ENCODE measurements at regions of chr19 and their contacts with region 1.

Region 1: GRCh38 chr19:45717166-45717982 is 13.3 kb downstream of the FBXO46 start:
- DNase-seq: peak; percentile 99
- H3K4me3 Mint-ChIP-seq: peak overlapping the region; percentile 96
- H3K27ac Mint-ChIP-seq: peak overlapping the region; percentile 93
- H3K4me1 Mint-ChIP-seq: peaks cover 39% of the 10 kb centered on the region
- H3K27me3 Mint-ChIP-seq: no peaks in the 10 kb centered on the region

Region 2: GRCh38 chr19:45506246-45506990 is 211.0 kb before region 1 on chr19:
- CTCF ChIA-PET with region 1: no interaction called
- POLR2A ChIA-PET with region 1: no interaction called
- intact Hi-C with region 1: loop called (anchors 1 kb)
- DNase-seq: peak; percentile 99
- H3K4me3 Mint-ChIP-seq: peak overlapping the region; percentile 86
- H3K27ac Mint-ChIP-seq: peak overlapping the region; percentile 94
- H3K4me1 Mint-ChIP-seq: peaks cover 35% of the 10 kb centered on the region
- H3K27me3 Mint-ChIP-seq: no peaks in the 10 kb centered on the region

Region 3: GRCh38 chr19:45670670-45671453 is 46.5 kb before region 1 on chr19:
- CTCF ChIA-PET with region 1: no interaction called
- POLR2A ChIA-PET with region 1: no interaction called
- intact Hi-C with region 1: loop called (anchors 1 kb)
- DNase-seq: peak; percentile 83
- H3K4me3 Mint-ChIP-seq: peak overlapping the region; percentile 57
- H3K27ac Mint-ChIP-seq: no peak overlapping the region
- H3K4me1 Mint-ChIP-seq: peaks cover 33% of the 10 kb centered on the region
- H3K27me3 Mint-ChIP-seq: peaks cover 17% of the 10 kb centered on the region

Region 4: GRCh38 chr19:45730389-45731288 is 13.3 kb after region 1 on chr19 and contains the start of gene FBXO46:
- CTCF ChIA-PET with region 1: interaction called, 9 read pairs
- POLR2A ChIA-PET with region 1: interaction called, 19 read pairs
- intact Hi-C with region 1: loop called (anchors 1 kb)
- DNase-seq: peak; percentile 98
- H3K4me3 Mint-ChIP-seq: peak within 1 kb of the TSS; percentile 98
- H3K27ac Mint-ChIP-seq: peak within 1 kb of the TSS; percentile 81
- H3K4me1 Mint-ChIP-seq: peaks cover 30% of the 10 kb centered on the region
- H3K27me3 Mint-ChIP-seq: no peaks in the 10 kb centered on the region
- total RNA-seq, gene FBXO46: 26.1 to 29.4 TPM

Region 5: DNA sequence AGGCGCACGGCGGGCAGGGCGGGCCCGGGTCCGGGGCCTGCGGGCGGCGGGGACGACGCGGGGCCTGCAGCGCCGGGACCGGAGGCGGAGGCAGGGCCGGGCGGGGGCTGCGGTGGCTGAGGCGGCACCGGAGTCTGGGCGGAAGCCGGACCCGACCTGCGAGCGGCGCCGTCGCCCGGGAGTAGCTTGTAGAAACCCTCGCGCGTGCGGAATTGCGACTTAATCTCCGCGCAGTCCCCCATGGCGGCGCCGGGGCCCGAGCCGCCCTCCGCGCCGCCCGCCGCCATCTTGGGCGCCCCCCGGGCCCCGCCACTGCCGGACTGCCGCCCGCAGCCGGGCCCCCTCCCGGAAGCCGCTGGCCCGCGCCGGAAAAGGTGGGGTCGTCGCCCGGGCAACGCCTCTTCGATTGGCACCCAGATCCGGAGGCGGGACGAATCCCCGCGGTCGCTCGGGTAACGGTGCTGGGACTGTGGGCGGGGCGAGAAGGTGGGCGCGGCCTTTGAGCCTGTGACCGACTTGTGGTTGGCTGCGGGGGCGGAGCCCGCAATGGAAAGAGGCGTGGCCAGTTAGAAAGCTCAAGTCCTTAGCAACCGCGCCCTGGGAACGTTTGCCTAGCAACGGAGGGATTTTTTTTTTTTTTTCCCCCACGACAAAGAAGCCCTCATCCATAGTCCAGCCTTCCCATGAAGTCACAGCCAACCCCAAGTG is 75.2 kb after region 1 on chr19 and contains the start of gene DMWD:
- CTCF ChIA-PET with region 1: no interaction called
- POLR2A ChIA-PET with region 1: no interaction called
- intact Hi-C with region 1: loop called (anchors 1 kb)
- DNase-seq: peak; percentile 100
- H3K4me3 Mint-ChIP-seq: peak within 1 kb of the TSS; percentile 94
- H3K27ac Mint-ChIP-seq: peak within 1 kb of the TSS; percentile 79
- H3K4me1 Mint-ChIP-seq: peaks cover 30% of the 10 kb centered on the region
- H3K27me3 Mint-ChIP-seq: peaks cover 18% of the 10 kb centered on the region
- total RNA-seq, gene DMWD: 43.1 to 45.8 TPM